Common myeloid progenitor, CD34-positive (primary cell): ENCODE measurements at regions of chr2 and their contacts with region 1.

Region 1: DNA sequence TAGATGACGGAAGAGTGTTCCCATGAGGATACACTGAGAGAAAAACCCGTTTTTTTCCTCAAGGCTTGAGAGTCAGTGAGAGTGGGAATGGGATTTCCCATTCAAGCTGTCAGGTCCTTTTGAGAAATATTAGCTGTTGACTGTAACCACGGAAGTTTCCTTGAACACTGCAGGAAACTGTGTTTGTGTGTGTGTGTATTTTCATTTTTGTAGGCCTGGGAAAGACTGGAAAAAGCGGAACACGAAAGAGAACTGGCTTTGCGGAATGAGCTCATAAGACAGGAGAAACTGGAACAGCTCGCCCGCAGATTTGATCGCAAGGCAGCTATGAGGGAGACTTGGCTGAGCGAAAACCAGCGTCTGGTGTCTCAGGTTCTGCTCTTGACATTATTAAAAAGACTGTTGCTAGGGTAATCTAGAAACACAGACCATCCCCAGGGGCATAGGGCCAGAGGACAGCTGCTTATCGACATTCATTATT is 98.8 kb upstream of the EML6 start:
- DNase-seq: no peak
- H3K4me3 ChIP-seq: no peak overlapping the region
- H3K27ac ChIP-seq: no peak overlapping the region
- H3K4me1 ChIP-seq: no peaks in the 10 kb centered on the region
- H3K27me3 ChIP-seq: no peaks in the 10 kb centered on the region

Region 2: DNA sequence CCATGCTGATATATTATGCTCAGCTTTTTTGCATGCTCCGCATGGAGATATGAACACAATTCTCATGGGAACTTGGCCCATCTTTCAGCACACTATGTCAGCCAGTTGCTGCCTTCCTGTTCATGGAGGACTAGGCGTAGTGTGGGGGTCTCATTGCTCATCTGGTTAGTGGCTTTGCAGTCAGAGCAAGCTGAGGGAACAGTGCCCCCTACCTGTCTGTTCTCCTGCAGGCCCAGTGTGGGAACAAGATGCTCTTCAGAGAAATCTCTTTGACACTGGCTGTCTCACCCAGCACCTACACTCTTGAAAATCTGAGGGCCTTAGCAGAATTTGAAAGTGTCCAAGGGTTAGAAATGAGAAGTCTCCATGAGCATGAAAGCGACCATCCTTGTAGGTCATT is 121.4 kb before region 1 on chr2:
- CTCF ChIA-PET with region 1: no interaction called
- POLR2A ChIA-PET with region 1: no interaction called
- DNase-seq: peak; percentile 73 to 84 (median 81)
- H3K4me3 ChIP-seq: no peak overlapping the region
- H3K27ac ChIP-seq: no peak overlapping the region
- H3K4me1 ChIP-seq: peaks cover 0 to 10% (median 2%) of the 10 kb centered on the region in 4 experiments
- H3K27me3 ChIP-seq: no peaks in the 10 kb centered on the region

Region 3: GRCh38 chr2:54634564-54635511 is 10.2 kb after region 1 on chr2:
- CTCF ChIA-PET with region 1: interaction called, 12 read pairs
- POLR2A ChIA-PET with region 1: no interaction called
- DNase-seq: no peak
- H3K4me3 ChIP-seq: no peak overlapping the region
- H3K27ac ChIP-seq: no peak overlapping the region
- H3K4me1 ChIP-seq: no peaks in the 10 kb centered on the region
- H3K27me3 ChIP-seq: no peaks in the 10 kb centered on the region

Region 4: DNA sequence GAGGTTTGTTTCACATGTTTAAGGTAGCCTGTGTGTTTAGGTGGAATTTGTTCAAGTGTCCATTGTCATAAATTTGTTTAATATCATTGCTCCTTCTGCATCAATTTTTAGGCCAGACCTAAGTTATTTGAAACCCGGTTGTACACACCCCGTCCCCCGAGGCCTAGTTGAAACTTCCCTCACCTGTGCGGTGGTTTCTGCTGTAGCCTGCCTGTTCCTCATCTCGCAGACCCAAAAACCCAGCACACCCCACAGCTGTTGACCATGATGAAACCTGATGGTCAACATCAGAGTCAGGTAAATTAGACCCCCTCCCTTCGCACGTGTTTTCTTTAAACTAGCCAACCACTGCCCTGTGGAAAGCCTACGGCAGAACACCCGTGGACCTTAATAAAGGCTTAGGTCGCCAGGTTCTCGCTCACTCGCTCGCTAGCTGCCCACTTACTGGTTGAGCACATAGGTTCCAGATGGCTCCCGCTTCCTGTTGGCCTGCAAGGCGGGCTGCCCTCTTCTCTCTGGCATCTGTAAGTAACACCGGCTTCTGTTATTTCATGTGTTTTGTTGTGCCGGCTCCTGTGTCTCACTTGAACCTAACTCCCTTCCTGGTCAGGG is 163.2 kb after region 1 on chr2:
- CTCF ChIA-PET with region 1: no interaction called
- POLR2A ChIA-PET with region 1: no interaction called
- DNase-seq: no peak
- H3K4me3 ChIP-seq: no peak overlapping the region
- H3K27ac ChIP-seq: no peak overlapping the region
- H3K4me1 ChIP-seq: no peaks in the 10 kb centered on the region
- H3K27me3 ChIP-seq: no peaks in the 10 kb centered on the region

Region 5: DNA sequence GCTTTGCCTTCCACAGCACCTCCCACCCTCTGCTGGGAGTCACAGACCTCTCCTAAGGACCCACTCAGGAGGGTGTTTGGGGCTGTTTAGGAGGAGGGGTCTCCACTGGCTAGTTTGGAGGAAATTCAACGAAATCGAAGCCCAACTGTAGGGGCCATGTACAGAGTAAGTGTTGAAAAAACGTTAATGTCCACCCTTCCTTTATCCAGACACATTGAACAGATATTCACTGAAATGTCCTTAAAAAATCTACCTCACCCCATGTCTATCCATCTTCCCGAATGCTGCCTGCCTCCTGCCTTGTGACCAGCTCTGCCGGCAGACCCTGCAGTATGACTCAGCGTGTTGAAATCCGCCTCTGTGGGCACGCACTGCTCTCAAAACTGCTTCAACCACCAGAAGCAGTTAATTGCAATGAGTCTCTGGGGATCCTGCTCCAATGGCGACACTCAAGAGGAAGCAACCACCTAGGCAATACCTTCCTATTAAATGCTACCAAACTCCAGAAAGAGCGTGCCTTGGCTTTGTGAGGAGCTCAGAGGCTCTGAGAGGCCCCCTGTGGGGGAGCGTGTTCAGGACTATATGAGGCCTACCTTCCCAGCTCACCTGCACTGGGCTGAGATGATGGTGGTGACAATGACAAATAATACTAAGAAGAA is 487.1 kb after region 1 on chr2:
- CTCF ChIA-PET with region 1: no interaction called
- POLR2A ChIA-PET with region 1: no interaction called
- DNase-seq: peak; percentile 85 to 97 (median 97)
- H3K4me3 ChIP-seq: peak overlapping the region in 5 of 7 experiments; percentile 2 to 43 (median 30)
- H3K27ac ChIP-seq: peak overlapping the region; percentile 71 to 88
- H3K4me1 ChIP-seq: peaks cover 21 to 76% (median 40%) of the 10 kb centered on the region in 4 experiments
- H3K27me3 ChIP-seq: no peaks in the 10 kb centered on the region